Mammary epithelial cell (primary cell): ENCODE measurements at regions of chr1 and their contacts with region 1.

Region 1: GRCh38 chr1:90045853-90046563 is 51.1 kb downstream of the ZNF326 start:
- DNase-seq: no peak
- H3K4me3 ChIP-seq: no peak overlapping the region
- H3K27ac ChIP-seq: no peak overlapping the region
- H3K4me1 ChIP-seq: no peaks in the 10 kb centered on the region
- H3K27me3 ChIP-seq: peaks cover 1% of the 10 kb centered on the region
- CTCF ChIP-seq: peak; percentile 55 to 62

Region 2: GRCh38 chr1:90114521-90115141 is 68.6 kb after region 1 on chr1:
- CTCF ChIA-PET with region 1: interaction called, 5 read pairs
- dilution Hi-C with region 1: no loop called
- in situ Hi-C with region 1: no loop called
- intact Hi-C with region 1: loop called (anchors 5 kb)
- DNase-seq: peak; percentile 41
- H3K4me3 ChIP-seq: no peak overlapping the region
- H3K27ac ChIP-seq: no peak overlapping the region
- H3K4me1 ChIP-seq: no peaks in the 10 kb centered on the region
- H3K27me3 ChIP-seq: no peaks in the 10 kb centered on the region
- CTCF ChIP-seq: peak; percentile 59 to 74